AG04450 (cell line): ENCODE measurements at regions of chr11 and their contacts with region 1.

Region 1: GRCh38 chr11:44621140-44621681 is 55.7 kb downstream of the CD82 start:
- DNase-seq: no peak
- H3K4me3 ChIP-seq: no peak overlapping the region
- H3K27ac ChIP-seq: no peak overlapping the region
- H3K27me3 ChIP-seq: no peaks in the 10 kb centered on the region
- CTCF ChIP-seq: peak; percentile 98

Region 2: GRCh38 chr11:44315947-44316658 is 305.1 kb before region 1 on chr11:
- CTCF ChIA-PET with region 1: no interaction called
- POLR2A ChIA-PET with region 1: no interaction called
- DNase-seq: no peak
- H3K4me3 ChIP-seq: peak overlapping the region; percentile 34; the same call in 1 of the 2 replicates
- H3K27ac ChIP-seq: no peak overlapping the region
- H3K27me3 ChIP-seq: peaks cover 98% of the 10 kb centered on the region
- CTCF ChIP-seq: no peak

Region 3: GRCh38 chr11:44556735-44557409 is 64.3 kb before region 1 on chr11:
- CTCF ChIA-PET with region 1: interaction called, 318 read pairs
- POLR2A ChIA-PET with region 1: interaction called, 4 read pairs
- DNase-seq: no peak
- H3K4me3 ChIP-seq: no peak overlapping the region
- H3K27ac ChIP-seq: no peak overlapping the region
- H3K27me3 ChIP-seq: peaks cover 3% of the 10 kb centered on the region
- CTCF ChIP-seq: peak; percentile 86

Region 4: GRCh38 chr11:44580701-44581100 is 40.5 kb before region 1 on chr11:
- CTCF ChIA-PET with region 1: interaction called, 10 read pairs
- POLR2A ChIA-PET with region 1: no interaction called
- DNase-seq: no peak
- H3K4me3 ChIP-seq: no peak overlapping the region
- H3K27ac ChIP-seq: no peak overlapping the region
- H3K27me3 ChIP-seq: no peaks in the 10 kb centered on the region
- CTCF ChIP-seq: no peak

Region 5: DNA sequence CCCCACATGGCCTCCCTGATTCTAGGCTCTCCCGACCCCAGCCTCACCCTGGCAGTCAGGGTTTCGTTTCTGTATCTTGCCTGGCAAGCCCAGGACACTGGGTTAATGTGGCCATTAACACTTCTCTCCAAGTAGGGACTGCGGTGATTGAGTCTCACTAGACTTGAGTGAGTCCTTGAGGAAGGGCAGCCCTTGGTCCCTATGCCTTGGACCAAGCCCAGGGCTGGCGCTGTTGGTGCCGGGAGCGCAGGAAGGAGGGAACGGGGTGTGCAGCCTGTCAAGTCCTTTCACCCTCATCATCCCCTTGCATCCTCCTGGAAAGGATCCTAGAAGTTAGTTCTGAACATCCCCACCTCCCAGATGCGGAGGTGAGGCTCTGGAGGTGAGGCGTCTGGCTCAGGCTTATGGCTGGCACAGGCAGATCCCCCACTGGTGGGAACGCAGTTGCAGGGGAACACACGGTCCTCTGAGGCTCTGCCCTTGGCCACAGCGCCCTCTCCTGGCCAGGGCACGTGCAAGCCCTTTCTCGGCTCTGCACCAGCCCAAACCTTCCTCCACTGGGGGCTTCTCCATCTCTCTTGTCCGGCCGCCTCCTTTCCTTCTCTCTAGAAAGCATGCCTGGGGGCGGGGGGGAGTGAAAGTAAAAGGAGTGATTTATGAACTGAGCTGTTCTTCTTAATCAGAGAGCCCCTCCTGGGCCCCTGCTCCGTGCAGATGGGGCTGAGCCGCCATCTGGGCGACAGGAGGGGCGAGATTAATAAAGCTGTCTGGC is 272.8 kb after region 1 on chr11:
- CTCF ChIA-PET with region 1: interaction called, 57 read pairs
- POLR2A ChIA-PET with region 1: no interaction called
- DNase-seq: peak; percentile 53
- H3K4me3 ChIP-seq: no peak overlapping the region
- H3K27ac ChIP-seq: no peak overlapping the region
- H3K27me3 ChIP-seq: peaks cover 29% of the 10 kb centered on the region
- CTCF ChIP-seq: peak; percentile 99

Region 6: DNA sequence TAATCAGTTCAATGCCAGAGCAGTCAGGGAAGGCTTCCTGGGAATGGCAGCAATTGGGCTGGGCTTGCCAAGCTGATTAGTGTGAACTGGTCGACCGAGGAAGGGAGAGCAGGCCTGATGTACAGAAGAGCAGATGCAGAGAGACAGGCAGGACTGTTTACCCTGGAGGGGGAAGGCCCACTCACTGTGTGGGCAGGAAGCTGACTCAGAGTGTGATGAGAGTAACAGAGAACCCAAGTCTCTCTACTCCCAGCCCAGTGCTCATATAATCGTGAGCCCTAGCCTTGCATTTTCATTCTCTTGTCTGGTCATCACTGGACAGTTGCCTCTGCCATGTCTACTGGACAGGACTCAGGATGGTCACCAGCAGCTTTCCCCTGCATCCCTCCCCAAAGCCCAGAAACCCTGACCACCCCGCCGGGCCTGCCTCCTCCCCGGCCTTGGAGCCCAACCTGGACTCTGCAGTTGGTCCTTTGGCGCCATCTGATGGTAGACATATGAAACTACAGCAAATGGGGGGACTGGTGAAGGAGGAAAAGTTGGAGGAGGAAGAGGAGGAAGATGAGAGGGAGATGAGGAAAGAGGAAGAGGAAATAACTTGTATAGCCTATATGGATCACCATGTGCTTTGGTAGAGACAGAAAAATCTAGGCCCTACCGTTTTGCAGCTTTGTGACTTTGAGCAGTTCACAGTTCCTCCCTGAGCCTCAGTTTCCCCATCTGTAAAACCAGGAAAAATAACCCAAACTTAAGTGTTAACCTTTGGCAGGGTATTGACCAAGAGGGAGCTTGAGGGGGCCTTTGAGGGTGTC is 481.8 kb after region 1 on chr11:
- CTCF ChIA-PET with region 1: interaction called, 10 read pairs
- POLR2A ChIA-PET with region 1: no interaction called
- DNase-seq: no peak
- H3K4me3 ChIP-seq: peak overlapping the region; percentile 21; the same call in 1 of the 2 replicates
- H3K27ac ChIP-seq: peak overlapping the region; percentile 11
- H3K27me3 ChIP-seq: peaks cover 30% of the 10 kb centered on the region
- CTCF ChIP-seq: peak; percentile 97